HAP-1 (cell line): ENCODE measurements at regions of chr16 and their contacts with region 1.

Region 1: GRCh38 chr16:77236063-77236511 is 36.9 kb downstream of the SYCE1L start:
- DNase-seq: peak; percentile 79 to 91
- H3K4me3 ChIP-seq: no peak overlapping the region
- H3K4me1 ChIP-seq: no peaks in the 10 kb centered on the region; the same call in 1 of the 2 replicates
- H3K27me3 ChIP-seq: peaks cover 4% of the 10 kb centered on the region; the same call in 1 of the 2 replicates

Region 2: GRCh38 chr16:77308163-77308561 is 72.1 kb after region 1 on chr16:
- in situ Hi-C with region 1: no loop called
- DNase-seq: no peak
- H3K4me3 ChIP-seq: no peak overlapping the region
- H3K4me1 ChIP-seq: no peaks in the 10 kb centered on the region
- H3K27me3 ChIP-seq: no peaks in the 10 kb centered on the region

Region 3: DNA sequence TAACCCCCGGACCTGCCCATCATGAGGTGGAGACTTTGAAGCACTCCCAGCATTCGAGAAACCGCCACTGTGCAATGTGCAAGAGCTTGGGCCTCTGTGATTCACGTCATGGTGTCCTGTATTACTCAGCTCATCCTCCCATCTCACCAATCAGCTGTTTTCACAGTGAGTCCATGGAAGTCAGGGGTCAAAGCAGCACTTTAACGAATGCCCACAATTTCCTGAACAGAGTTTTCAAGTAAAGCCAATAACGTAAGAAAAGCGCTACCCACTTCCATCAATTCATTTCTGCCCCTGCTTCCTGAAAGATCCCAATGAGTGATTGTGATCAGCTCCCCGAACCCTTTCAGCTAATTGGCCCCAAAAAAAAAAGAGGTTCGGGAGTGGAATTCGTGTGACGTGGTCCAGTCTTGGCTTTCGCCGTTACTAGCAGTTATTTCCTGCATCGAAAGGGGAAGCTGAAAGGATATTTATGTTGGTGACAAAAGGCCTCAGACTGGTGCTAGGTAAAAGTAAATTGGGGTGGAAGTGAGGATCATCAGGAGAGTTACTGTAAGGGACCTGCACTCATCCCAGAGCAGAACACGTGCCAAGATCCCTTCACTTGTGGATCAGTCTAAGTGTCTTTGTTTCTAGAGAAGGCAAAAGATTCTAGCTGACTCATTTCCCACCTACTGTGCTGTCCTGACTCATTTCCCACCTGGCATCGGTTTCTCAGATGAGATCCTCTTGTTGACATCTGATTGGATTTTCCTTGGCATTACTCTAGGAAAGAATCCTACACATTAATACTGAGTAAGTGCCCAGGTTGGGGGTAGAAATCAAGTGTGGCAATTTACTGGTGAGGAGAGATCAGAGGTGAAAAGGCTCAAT is 349.5 kb after region 1 on chr16:
- in situ Hi-C with region 1: loop called (anchors 5 kb)
- DNase-seq: no peak
- H3K4me3 ChIP-seq: no peak overlapping the region
- H3K4me1 ChIP-seq: no peaks in the 10 kb centered on the region
- H3K27me3 ChIP-seq: no peaks in the 10 kb centered on the region

Region 4: GRCh38 chr16:77963185-77964044 is 727.3 kb after region 1 on chr16:
- in situ Hi-C with region 1: loop called (anchors 10 kb)
- DNase-seq: no peak
- H3K4me3 ChIP-seq: no peak overlapping the region
- H3K4me1 ChIP-seq: no peaks in the 10 kb centered on the region
- H3K27me3 ChIP-seq: no peaks in the 10 kb centered on the region